Calu3 (cell line): ENCODE measurements at regions of chr6 and their contacts with region 1.

Region 1: DNA sequence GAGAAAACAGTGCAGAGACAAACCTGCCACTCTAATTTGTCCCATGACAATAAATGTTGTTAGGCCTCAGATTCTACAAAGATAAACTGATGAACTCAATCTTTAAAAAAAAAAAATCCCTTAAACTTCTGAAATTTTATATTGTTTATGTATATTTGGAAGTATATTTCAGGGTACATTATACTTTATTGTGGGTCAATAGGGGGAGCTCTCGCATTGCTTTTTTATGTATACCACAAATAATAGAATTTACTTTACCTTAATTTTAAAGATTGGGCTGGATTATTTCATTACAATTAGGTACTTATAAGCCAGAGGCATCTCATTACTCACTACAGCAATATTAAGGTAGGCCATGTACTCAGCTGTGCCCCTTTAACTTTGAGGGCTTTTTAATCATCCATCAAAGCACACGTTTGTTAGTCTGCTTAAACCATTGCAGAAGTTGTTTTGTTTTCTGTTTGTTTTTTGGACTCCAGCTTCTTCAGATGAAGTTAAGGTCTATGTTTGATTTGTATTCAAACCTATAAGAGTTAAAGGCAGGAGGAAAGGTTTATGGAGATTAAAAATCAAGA is 56.3 kb upstream of the EYA4 start:
- DNase-seq: no peak
- H3K4me3 Mint-ChIP-seq: no peak overlapping the region
- H3K27ac Mint-ChIP-seq: no peak overlapping the region
- H3K4me1 Mint-ChIP-seq: peaks cover 9% of the 10 kb centered on the region
- H3K27me3 Mint-ChIP-seq: no peaks in the 10 kb centered on the region
- CTCF ChIP-seq: peak; percentile 59

Region 2: DNA sequence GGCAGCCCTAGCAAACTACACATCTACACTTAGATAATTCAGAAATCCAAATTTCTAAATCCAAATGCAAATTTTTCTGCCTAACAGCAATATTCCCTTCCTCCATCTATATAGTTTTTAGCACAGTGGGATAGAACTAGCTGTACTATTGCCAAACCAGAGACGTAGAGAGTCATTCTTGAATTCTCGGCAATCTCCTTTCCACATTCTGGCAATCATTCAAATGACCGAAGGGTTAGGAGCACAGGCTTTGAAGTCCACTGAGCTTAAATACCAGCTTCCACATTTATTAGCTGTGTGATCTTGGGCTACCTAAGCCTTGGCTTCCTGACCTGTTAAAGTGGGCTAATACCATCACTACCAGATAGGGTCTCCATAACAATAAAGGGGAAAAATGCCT is 373.6 kb before region 1 on chr6:
- CTCF ChIA-PET with region 1: no interaction called
- intact Hi-C with region 1: no loop called
- DNase-seq: no peak
- H3K4me3 Mint-ChIP-seq: no peak overlapping the region
- H3K27ac Mint-ChIP-seq: no peak overlapping the region
- H3K4me1 Mint-ChIP-seq: peaks cover 13% of the 10 kb centered on the region
- H3K27me3 Mint-ChIP-seq: no peaks in the 10 kb centered on the region
- CTCF ChIP-seq: no peak

Region 3: DNA sequence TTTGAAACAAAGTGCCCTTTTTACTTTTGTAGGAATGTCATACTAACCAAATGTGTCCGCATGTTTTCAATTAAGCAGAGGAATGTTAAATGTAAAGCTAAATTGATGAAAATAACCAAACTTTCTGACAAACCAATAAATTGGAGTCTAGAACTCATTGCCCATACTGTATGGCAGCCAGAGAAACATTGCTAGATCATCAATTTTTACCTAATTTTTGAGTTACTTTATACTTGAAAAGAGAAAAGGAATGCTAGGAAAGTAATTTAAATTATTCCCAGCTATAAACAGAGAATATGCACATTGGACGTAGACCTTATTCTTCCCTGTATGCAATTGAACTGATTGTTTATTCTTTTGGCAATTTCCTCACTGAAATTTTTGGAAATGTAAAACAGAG is 326.1 kb before region 1 on chr6:
- CTCF ChIA-PET with region 1: interaction called, 10 read pairs
- intact Hi-C with region 1: no loop called
- DNase-seq: no peak
- H3K4me3 Mint-ChIP-seq: no peak overlapping the region
- H3K27ac Mint-ChIP-seq: no peak overlapping the region
- H3K4me1 Mint-ChIP-seq: no peaks in the 10 kb centered on the region
- H3K27me3 Mint-ChIP-seq: no peaks in the 10 kb centered on the region
- CTCF ChIP-seq: no peak

Region 4: DNA sequence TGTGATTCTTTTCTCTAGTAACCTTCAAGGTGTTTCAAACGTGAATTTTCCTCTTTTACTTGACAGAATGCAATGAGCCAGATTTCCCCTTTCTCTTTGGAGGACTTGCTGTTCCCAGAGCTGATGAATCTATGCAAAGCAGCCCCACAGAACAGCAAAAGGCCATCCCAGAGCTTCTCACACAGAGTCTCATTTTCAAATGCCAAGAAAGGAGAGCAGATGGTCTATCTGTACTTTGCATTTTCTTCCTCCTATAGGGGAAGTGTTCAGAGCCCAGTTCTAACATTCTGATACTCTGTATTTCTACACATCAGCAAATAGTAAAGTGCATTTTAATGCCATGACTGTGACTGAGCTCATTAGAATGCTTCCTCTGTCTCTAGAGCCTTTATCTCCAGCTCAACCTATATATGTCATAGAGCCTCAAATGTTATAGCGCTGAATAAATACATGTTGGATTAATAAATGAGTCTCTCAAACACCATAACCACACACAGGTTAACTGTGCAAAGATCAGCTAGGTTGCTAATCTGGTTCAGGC is 25.6 kb before region 1 on chr6:
- CTCF ChIA-PET with region 1: no interaction called
- intact Hi-C with region 1: no loop called
- DNase-seq: no peak
- H3K4me3 Mint-ChIP-seq: no peak overlapping the region
- H3K27ac Mint-ChIP-seq: peak overlapping the region; percentile 37
- H3K4me1 Mint-ChIP-seq: peaks cover 16% of the 10 kb centered on the region
- H3K27me3 Mint-ChIP-seq: no peaks in the 10 kb centered on the region
- CTCF ChIP-seq: no peak